Endothelial cell of umbilical vein (primary cell): ENCODE measurements at regions of chr21 and their contacts with region 1.

Region 1: DNA sequence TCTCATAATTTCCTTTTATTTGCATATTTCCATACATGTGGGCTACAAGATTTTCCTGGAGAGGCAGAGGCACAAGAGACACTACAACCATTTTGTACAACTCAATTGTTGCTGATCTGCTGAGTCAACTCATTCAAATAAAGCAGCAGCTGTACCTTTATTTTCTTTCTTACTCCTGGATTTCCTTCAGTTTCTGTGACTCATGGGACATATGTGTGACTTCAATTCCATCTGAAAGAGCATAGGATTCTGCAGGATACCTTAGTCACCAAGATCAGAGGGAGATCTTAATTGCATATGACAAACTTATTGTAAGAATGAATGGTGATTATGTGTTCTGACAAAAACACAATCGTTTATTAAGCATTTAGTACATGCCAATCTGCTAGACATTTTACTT is 2219.4 kb downstream of the NCAM2 start:
- DNase-seq: peak; percentile 42
- H3K4me3 ChIP-seq: no peak overlapping the region
- H3K27ac ChIP-seq: peak overlapping the region; percentile 23
- H3K4me1 ChIP-seq: peaks cover 3% of the 10 kb centered on the region
- H3K27me3 ChIP-seq: no peaks in the 10 kb centered on the region
- CTCF ChIP-seq: no peak
- POLR2A ChIP-seq: no peak

Region 2: DNA sequence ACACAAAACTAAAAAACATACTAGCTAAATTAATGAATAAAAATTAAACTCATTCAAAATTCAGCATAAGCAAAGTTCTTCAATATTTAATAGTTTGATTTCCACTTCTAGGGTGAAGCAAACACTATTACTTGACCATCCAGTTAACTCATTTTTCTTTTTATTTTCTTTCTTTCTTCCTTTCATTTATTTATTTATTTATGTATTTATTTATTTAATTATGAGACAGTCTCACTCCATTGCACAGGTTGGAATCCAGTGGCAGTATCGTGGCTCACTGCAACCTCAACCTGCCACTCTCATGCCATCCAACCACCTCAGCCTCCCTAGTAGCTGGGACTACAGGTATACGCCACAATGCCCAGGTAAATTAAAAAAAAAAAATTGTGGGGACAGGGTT is 149.9 kb before region 1 on chr21:
- CTCF ChIA-PET with region 1: no interaction called
- POLR2A ChIA-PET with region 1: no interaction called
- dilution Hi-C with region 1: no loop called
- intact Hi-C with region 1: no loop called
- DNase-seq: no peak
- H3K4me3 ChIP-seq: no peak overlapping the region
- H3K27ac ChIP-seq: no peak overlapping the region
- H3K4me1 ChIP-seq: no peaks in the 10 kb centered on the region
- H3K27me3 ChIP-seq: no peaks in the 10 kb centered on the region
- CTCF ChIP-seq: no peak
- POLR2A ChIP-seq: no peak

Region 3: DNA sequence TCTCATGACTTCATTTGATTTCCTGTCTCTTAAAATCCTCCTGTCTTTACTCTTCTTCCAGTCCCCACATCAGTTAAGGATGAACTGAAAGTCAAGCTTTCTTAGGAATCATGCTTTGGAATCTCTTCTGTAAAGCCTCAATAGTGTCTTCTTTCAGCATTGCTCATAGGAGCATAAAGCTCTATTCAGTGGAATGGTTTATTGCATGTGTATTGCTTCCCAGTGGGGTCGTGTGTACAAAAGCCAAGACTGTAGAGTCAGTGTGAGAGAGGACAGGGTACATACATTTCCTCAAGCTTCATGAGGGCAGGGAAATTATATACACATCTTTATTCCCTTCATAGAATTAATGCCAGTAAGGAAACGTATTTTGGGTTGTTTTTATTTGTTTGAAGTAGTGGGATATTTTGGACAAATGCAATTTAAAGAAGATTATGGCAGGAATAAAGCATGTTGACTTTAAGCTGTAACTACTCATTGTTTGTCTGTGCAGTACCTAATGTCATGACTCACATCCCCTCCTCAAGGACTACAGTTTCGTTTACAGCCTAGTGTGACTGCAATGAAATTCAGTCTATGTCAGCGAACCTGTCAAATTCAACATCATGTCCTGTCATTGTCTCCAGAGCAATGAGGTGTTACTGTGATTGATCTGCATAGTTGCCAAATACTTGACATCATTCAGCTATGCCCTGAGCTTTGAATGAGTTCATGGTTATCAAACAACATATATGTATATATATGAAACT is 55.2 kb before region 1 on chr21:
- CTCF ChIA-PET with region 1: no interaction called
- POLR2A ChIA-PET with region 1: no interaction called
- dilution Hi-C with region 1: no loop called
- intact Hi-C with region 1: loop called (anchors 5 kb)
- DNase-seq: peak; percentile 94
- H3K4me3 ChIP-seq: no peak overlapping the region
- H3K27ac ChIP-seq: peak overlapping the region; percentile 89
- H3K4me1 ChIP-seq: peaks cover 18% of the 10 kb centered on the region
- H3K27me3 ChIP-seq: no peaks in the 10 kb centered on the region
- CTCF ChIP-seq: no peak
- POLR2A ChIP-seq: no peak

Region 4: GRCh38 chr21:23247334-23247733 is 29.7 kb after region 1 on chr21:
- CTCF ChIA-PET with region 1: no interaction called
- POLR2A ChIA-PET with region 1: no interaction called
- dilution Hi-C with region 1: no loop called
- intact Hi-C with region 1: no loop called
- DNase-seq: peak; percentile 52
- H3K4me3 ChIP-seq: no peak overlapping the region
- H3K27ac ChIP-seq: no peak overlapping the region
- H3K4me1 ChIP-seq: no peaks in the 10 kb centered on the region
- H3K27me3 ChIP-seq: no peaks in the 10 kb centered on the region
- CTCF ChIP-seq: no peak
- POLR2A ChIP-seq: no peak